Activated T-helper 1 cell treated with anti-CD3 and anti-CD28 coated beads, Interleukin-12 subunit alpha, Interleukin-12 subunit beta, Interleukin-2, Interleukin-4 antibody, amounts not matched to agents 30 ng/mL and 10 ng/mL and 1 ng/mL, durations not matched to agents 14 hours and 24 hours and 36 hours (primary cell): ENCODE measurements at regions of chr9 and their contacts with region 1.

Region 1: DNA sequence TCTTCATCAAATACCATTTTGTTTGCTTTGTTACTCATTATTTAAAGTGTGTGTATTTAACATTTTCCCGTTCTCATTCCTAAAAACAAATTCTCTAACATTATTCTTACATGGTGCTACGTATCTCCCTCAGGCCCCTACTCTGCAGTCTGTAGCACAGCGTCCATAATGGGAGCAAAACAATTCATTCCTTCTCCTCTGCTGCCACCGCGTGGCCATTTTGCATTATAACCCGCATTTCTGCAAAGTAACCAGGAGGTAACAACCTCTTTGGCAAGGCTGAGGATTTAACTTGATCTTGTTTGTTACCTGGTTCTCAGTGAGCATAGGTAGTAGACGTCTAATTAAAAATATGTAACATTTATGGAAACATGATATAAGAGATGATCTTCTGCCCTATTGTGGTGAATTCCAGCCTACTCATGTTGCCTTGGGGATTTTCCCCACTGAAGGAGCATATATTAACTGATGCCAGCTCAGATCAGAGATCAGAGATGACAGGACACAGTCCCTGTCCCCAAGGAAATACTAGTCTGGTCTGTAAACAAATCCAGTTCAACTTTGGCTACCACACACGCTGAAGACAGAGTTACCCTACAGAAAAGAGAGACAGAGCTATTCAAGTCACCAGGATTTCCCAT is 10.5 kb downstream of the OR1K1 start:
- DNase-seq: peak; percentile 59
- H3K4me3 Mint-ChIP-seq: no peak overlapping the region
- H3K27ac Mint-ChIP-seq: no peak overlapping the region
- H3K4me1 Mint-ChIP-seq: peaks cover 34% of the 10 kb centered on the region
- H3K27me3 Mint-ChIP-seq: no peaks in the 10 kb centered on the region

Region 2: GRCh38 chr9:120892748-120893610 is 1917.4 kb before region 1 on chr9:
- intact Hi-C with region 1: loop called (anchors 5 kb)
- DNase-seq: peak; percentile 62
- H3K4me3 Mint-ChIP-seq: peak overlapping the region; percentile 69
- H3K27ac Mint-ChIP-seq: peak overlapping the region; percentile 99
- H3K4me1 Mint-ChIP-seq: peaks cover 74% of the 10 kb centered on the region
- H3K27me3 Mint-ChIP-seq: no peaks in the 10 kb centered on the region

Region 3: DNA sequence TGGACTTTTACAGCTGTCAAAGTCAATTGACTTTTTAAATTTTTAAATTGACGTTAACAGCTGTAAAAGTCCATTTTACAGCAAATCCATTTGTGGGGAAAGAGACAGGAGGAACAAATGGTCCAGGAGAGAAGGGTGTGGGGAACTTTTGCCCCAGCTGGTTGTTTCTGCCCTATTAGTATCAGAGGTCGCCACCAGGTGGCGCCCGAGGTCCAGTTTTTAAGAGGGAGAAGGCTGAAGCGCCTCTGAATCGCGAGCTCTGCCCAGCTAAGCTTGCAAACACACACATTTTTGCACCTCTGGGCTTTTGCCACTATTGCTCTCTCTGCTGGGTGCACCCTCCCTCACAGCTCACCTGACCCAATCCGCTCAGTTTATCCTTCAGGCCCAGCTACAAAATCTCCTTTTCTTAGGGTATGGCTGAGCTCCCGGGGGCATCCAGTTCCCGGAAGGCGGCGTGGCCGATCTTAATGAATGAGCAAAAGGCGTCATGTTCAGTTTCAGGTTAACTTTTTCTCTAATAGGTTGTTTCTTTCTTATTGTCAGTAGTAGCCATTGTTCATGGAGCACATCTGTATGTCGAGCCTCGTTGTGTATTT is 711.1 kb before region 1 on chr9:
- intact Hi-C with region 1: loop called (anchors 1 kb)
- DNase-seq: peak; percentile 58
- H3K4me3 Mint-ChIP-seq: no peak overlapping the region
- H3K27ac Mint-ChIP-seq: no peak overlapping the region
- H3K4me1 Mint-ChIP-seq: peaks cover 17% of the 10 kb centered on the region
- H3K27me3 Mint-ChIP-seq: peaks cover 9% of the 10 kb centered on the region

Region 4: GRCh38 chr9:122264360-122265148 is 545.9 kb before region 1 on chr9 and contains the starts of genes MRRF and RBM18:
- intact Hi-C with region 1: loop called (anchors 1 kb)
- DNase-seq: peak; percentile 89
- H3K4me3 Mint-ChIP-seq: peak within 1 kb of the TSS; percentile 97
- H3K27ac Mint-ChIP-seq: peak within 1 kb of the TSS; percentile 100
- H3K4me1 Mint-ChIP-seq: peaks cover 38% of the 10 kb centered on the region
- H3K27me3 Mint-ChIP-seq: no peaks in the 10 kb centered on the region
- total RNA-seq, gene MRRF: 58.8 and 66.0 TPM in 2 replicates
- total RNA-seq, gene RBM18: 29.9 and 31.5 TPM in 2 replicates

Region 5: DNA sequence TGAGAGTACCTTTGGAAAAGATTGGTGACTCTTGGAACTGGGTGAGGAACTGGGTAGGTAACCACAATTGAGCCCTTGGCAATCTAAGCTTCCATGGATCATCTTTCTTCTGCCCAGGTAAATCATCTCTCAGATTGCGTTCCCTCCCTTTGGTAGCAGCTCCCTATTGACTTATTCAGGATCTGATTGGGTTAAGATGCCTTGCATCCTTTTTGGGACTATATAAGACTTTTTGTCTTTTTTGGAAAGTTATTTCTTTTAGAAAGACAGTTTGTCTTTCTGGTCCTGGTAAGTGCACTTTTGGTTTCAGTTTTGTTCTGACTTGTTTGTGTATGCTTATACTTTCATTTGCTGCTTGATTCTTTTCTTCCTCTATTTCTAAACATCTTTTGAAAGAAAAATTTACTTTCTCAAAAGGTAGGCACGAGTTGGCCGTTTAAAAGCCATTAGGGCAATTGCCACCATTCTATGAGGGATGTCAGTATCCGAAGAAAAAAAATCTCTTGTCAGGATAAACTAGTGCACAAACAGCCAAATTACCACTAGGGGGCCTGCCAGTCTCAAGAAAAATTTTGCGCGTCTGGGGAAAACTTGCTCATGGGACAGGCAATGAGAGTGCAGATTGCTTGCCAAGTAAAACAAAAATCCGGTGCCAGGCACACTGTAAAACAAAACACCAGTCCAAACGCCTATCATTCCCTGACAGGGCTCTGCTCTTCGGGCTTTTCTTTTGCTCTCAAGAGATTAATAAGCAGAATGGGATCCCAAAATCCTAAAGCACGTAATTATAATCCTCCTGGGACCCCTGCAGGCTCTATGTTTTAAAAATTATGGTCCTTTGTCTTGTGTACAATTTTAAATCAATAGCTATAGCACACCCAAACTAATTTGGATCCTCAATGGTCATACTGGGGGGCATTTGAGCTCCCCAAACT is 345.5 kb before region 1 on chr9:
- intact Hi-C with region 1: loop called (anchors 1 kb)
- DNase-seq: peak; percentile 59
- H3K4me3 Mint-ChIP-seq: peak overlapping the region; percentile 81
- H3K27ac Mint-ChIP-seq: peak overlapping the region; percentile 80
- H3K4me1 Mint-ChIP-seq: peaks cover 17% of the 10 kb centered on the region
- H3K27me3 Mint-ChIP-seq: peaks cover 26% of the 10 kb centered on the region

Region 6: DNA sequence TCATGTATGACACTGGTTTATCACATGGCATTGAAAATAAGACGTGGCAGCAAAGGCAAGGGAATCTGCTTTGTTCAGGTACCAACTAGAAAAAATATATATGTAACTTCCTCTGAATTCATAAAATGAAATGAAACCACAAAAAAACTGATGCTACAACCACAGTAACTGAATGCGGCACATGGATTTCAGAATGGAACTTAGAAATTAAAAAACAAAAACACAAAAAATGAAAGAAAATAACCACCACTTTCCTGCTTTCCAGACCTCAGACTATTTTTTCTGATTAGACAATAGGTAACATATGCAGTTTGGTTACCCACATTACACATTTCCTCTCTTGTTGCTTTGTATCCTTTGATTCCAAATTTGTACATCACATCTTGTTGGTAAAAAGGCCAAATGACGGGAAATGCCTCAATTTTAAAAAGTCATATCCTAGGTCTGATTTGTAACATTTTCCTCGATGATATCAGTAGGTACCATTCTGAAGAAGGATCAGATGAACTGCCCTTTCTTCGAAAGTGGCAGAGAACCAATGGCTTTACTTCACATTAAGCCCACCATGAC is 36.0 kb after region 1 on chr9:
- intact Hi-C with region 1: loop called (anchors 1 kb)
- DNase-seq: no peak
- H3K4me3 Mint-ChIP-seq: peak overlapping the region; percentile 28
- H3K27ac Mint-ChIP-seq: peak overlapping the region; percentile 90
- H3K4me1 Mint-ChIP-seq: peaks cover 46% of the 10 kb centered on the region
- H3K27me3 Mint-ChIP-seq: no peaks in the 10 kb centered on the region

Region 7: DNA sequence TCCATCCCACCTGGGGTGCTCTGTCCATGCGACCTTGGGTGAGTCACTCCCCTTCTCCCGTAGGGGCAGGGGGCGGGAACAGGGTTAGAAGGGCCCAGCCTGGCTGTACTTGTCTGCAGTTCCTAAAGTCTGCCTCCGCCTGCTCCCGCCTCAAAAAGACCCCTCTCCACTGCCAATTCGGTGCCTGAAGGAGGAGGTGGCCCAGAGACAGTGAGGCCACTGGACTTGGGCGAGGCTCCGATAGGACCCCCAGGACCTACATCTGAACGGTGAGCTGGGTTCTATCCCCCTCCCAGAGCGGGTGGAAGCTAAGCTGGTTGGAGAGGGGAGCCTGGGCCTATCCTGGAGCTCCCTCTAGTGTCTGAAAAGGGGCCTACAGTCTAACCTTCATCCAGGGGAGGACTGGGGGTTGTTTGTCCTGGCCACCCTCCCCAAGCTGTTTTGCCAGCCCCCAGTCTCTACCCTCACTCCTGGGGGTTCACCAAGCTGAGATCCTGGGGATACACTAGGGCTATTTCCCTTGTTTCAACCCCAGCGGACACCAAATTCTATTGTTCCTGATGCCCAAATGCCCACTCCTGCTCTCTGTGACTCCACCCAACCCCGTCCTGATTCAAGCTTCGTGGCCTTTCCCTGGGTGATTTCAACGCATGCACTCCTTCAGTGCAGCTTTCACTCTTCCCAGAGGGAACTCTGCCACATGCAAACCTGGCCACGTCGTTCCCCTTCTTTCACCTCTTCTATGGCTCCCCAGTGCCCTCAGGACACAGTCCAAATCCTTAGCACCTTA is 539.5 kb after region 1 on chr9:
- intact Hi-C with region 1: loop called (anchors 2 kb)
- DNase-seq: peak; percentile 55
- H3K4me3 Mint-ChIP-seq: no peak overlapping the region
- H3K27ac Mint-ChIP-seq: no peak overlapping the region
- H3K4me1 Mint-ChIP-seq: no peaks in the 10 kb centered on the region
- H3K27me3 Mint-ChIP-seq: peaks cover 12% of the 10 kb centered on the region